Posterior cingulate gyrus (tissue), 11 donors: ENCODE measurements at regions of chr1 and their contacts with region 1.

Region 1: GRCh38 chr1:154729031-154729442 is 121.1 kb upstream of the ADAR start:
- DNase-seq: no peak

Region 2: DNA sequence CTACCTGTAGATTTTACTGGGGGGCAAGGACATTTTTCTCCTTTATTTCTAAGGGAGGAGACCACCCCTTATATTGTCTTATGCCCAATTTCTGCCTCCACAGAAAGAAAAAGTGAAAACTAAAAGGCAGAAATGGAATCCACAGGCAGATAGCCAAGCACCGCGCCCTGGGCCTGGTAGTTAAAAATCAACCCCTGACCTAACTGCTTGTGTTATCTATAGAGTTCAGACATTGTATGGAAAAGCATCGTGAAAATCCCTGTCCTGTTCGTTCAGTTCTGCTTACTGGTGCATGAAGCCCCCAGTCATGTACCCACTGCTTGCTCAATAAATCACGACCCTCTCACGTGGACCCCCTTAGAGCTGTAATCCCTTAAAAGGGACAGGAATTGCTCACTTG is 357.6 kb before region 1 on chr1:
- intact Hi-C with region 1: loop called (anchors 10 kb)
- DNase-seq: no peak